ENCODE measurements at regions of chr9 and their contacts with region 1.

Region 1: DNA sequence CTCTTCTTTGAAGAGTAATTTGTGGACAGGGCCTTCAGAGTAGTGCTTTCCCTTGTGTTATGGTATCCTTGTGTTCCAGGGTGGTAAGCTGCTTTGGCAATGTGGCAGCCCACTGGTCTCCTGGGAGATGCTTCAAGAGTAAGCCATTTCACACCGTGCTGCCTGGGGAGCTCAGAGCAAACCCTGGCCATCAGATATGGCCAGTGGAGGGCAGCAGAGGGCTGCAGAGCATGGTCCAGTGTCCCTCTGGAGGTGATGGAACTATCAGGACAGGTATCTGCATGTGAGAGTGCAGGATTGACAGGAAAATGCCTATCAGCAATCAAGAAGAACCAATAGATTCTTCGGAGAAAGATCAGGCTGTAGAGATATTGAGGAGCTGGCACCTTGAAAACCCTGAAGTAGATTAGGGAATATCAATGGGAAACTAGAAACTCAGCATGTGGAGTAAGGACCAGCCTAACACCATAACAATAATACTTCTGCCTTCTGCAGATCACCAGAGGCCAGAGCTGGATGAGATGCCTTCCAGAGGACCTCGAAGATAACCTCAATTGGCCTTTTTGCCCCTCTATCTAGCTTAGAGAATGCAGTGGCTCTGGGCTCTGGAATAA is 90.8 kb downstream of the PLPPR1 start:
- DNase-seq: peak; percentile 57
- ATAC-seq: peak; percentile 100
- H3K4me3 ChIP-seq: no peak overlapping the region
- H3K27ac ChIP-seq: no peak overlapping the region
- H3K4me1 ChIP-seq: peaks cover 6% of the 10 kb centered on the region; the same call in 1 of the 2 replicates
- H3K27me3 ChIP-seq: no peaks in the 10 kb centered on the region
- CTCF ChIP-seq: peak; percentile 99
- EP300 ChIP-seq: no peak
- POLR2A ChIP-seq: no peak
- RAD21 ChIP-seq: peak; percentile 95

Region 2: GRCh38 chr9:100714372-100715099 is 404.8 kb before region 1 on chr9:
- CTCF ChIA-PET with region 1: no interaction called
- POLR2A ChIA-PET with region 1: no interaction called
- in situ Hi-C with region 1: no loop called
- intact Hi-C with region 1: loop called (anchors 1 kb)
- DNase-seq: peak; percentile 48
- ATAC-seq: peak; percentile 91
- H3K4me3 ChIP-seq: no peak overlapping the region
- H3K27ac ChIP-seq: no peak overlapping the region
- H3K4me1 ChIP-seq: no peaks in the 10 kb centered on the region
- H3K27me3 ChIP-seq: no peaks in the 10 kb centered on the region
- CTCF ChIP-seq: peak; percentile 82
- EP300 ChIP-seq: no peak
- POLR2A ChIP-seq: no peak
- RAD21 ChIP-seq: peak; percentile 37; the same call in 1 of the 2 replicates

Region 3: DNA sequence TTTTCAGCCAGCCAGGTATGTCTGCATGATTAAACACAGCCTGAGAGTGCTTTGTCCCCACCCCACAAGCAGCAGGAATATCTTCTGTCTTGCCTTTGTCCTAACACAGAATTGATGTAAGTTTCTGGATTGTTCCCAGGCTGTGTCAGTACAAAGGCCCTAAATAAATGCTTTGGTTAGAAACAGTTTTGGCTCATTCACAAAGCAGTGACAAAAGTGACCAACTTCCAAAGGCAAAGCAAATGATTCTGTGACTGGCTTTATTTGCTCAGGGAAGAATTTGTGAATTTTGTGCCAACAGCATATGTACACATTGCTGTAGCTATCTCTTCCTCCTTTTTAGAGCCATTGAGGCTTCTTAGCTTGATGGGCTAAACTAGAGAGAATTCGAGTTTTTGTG is 42.9 kb after region 1 on chr9:
- CTCF ChIA-PET with region 1: no interaction called
- POLR2A ChIA-PET with region 1: no interaction called
- in situ Hi-C with region 1: no loop called
- intact Hi-C with region 1: loop called (anchors 5 kb)
- DNase-seq: peak; percentile 65
- ATAC-seq: peak; percentile 47; the same call in 2 of the 3 replicates
- H3K4me3 ChIP-seq: no peak overlapping the region
- H3K27ac ChIP-seq: no peak overlapping the region
- H3K4me1 ChIP-seq: peaks cover 35% of the 10 kb centered on the region
- H3K27me3 ChIP-seq: no peaks in the 10 kb centered on the region
- CTCF ChIP-seq: no peak
- EP300 ChIP-seq: no peak
- POLR2A ChIP-seq: no peak
- RAD21 ChIP-seq: no peak

Region 4: DNA sequence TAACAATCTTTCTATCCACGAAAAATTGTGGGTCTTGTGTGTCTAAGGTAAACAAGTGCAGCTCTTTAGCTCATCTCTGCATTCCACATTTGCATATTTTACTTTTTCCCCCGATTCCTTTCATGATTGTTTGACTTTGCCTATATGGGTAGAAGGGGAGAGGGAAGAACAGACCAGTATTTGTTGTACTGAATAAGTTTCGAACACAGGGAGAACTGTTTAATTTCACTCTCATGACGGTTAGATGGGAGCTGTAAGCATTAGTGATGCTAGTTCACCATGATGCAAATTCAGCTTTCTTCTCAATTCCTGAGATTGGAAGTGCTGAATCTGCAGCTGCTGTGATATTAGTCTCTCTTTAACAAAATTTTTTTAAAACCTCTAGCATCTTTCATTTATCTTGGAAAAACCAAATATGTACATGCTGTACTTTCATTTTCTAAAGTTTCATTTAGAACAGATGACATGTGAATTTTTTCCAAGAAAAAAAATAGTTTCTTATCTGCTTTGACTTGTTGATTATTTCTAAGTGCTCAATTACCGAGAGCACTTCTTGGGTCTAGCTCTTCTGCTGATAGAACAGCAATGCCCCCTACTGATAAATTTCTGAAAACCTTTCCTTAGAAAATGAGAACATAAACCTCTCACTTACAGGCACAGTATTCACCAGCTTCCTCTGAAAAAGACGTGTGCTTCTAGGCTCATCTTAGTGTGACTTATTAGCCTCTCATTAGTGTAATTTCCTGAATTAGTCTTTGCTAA is 116.0 kb after region 1 on chr9:
- CTCF ChIA-PET with region 1: interaction called, 38 read pairs
- POLR2A ChIA-PET with region 1: no interaction called
- in situ Hi-C with region 1: loop called (anchors 5 kb)
- intact Hi-C with region 1: loop called (anchors 1 kb)
- DNase-seq: peak; percentile 45
- ATAC-seq: peak; percentile 81
- H3K4me3 ChIP-seq: no peak overlapping the region
- H3K27ac ChIP-seq: no peak overlapping the region
- H3K4me1 ChIP-seq: peaks cover 30% of the 10 kb centered on the region
- H3K27me3 ChIP-seq: no peaks in the 10 kb centered on the region
- CTCF ChIP-seq: peak; percentile 68
- EP300 ChIP-seq: no peak
- POLR2A ChIP-seq: no peak
- RAD21 ChIP-seq: peak; percentile 47

Region 5: GRCh38 chr9:101366038-101366756 is 246.9 kb after region 1 on chr9:
- CTCF ChIA-PET with region 1: no interaction called
- POLR2A ChIA-PET with region 1: no interaction called
- in situ Hi-C with region 1: no loop called
- intact Hi-C with region 1: no loop called
- DNase-seq: peak; percentile 91
- ATAC-seq: peak; percentile 92
- H3K4me3 ChIP-seq: peak overlapping the region in 2 of 3 experiments; percentile 42 to 46; a peak in 3 of 6 replicates
- H3K27ac ChIP-seq: peak overlapping the region; percentile 74
- H3K4me1 ChIP-seq: peaks cover 45% of the 10 kb centered on the region
- H3K27me3 ChIP-seq: no peaks in the 10 kb centered on the region
- CTCF ChIP-seq: no peak
- EP300 ChIP-seq: peak in 1 of 2 experiments; percentile 44; a peak in 1 of 4 replicates
- POLR2A ChIP-seq: peak in 1 of 2 experiments; percentile 41; a peak in 1 of 4 replicates
- RAD21 ChIP-seq: no peak

Region 6: DNA sequence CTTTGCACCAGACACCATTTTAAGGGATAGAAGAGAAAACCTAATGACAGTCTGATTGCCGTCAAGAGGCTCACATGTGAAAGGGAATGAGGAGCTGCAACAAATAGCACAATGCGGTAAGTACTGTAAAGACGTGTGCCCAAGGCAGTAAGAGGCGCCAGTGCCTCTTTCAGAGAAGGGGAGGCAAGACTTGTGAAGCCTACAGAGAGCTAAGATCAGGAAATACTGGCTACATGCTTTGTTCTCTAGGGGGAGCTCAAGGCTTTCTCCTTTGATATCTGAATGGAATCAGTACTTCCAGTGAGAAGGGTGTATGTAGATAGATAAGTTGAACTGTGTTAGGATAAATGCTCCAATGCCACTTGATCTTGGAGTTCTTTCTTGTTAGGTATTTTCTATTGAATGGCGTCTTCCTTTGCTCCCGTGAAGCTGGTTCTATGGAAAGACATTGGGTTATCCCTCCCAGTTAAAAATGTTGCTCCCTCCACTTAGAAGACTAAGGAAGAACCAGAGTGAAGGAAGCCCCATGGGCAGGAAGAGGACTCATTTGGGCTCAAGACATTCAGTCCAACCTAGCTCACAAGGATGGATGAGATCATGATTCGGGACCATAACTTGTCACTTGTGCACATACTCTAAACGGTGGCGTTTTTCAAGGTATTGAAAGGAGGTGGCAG is 339.8 kb after region 1 on chr9:
- CTCF ChIA-PET with region 1: interaction called, 5 read pairs
- POLR2A ChIA-PET with region 1: no interaction called
- in situ Hi-C with region 1: no loop called
- intact Hi-C with region 1: loop called (anchors 5 kb)
- DNase-seq: peak; percentile 86
- ATAC-seq: peak; percentile 95
- H3K4me3 ChIP-seq: no peak overlapping the region
- H3K27ac ChIP-seq: no peak overlapping the region
- H3K4me1 ChIP-seq: peaks cover 52% of the 10 kb centered on the region
- H3K27me3 ChIP-seq: no peaks in the 10 kb centered on the region
- CTCF ChIP-seq: peak; percentile 91
- EP300 ChIP-seq: no peak
- POLR2A ChIP-seq: no peak
- RAD21 ChIP-seq: peak; percentile 80